RWPE1 (cell line): ENCODE measurements at regions of chr6 and their contacts with region 1.

Region 1: DNA sequence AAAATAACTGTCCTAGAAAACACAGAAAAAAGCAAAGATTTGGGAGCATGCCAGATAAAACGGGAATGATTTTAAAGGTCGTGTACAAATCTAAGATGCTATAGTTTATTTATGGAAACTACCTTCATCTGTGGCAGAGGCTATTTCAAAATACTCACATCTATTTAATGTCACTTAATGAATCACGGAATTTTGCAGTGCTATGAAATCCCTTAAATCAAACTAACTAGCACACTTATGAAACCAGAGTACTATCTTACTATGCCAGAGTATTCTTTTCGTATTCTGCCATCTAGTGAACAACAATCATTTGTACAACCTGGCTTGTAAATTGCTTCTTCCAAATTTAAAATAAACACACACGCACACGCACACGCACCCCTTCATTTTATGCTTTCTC is 77.9 kb upstream of the BMP5 start:
- DNase-seq: peak; percentile 14
- H3K27ac ChIP-seq: no peak overlapping the region
- CTCF ChIP-seq: peak; percentile 60

Region 2: DNA sequence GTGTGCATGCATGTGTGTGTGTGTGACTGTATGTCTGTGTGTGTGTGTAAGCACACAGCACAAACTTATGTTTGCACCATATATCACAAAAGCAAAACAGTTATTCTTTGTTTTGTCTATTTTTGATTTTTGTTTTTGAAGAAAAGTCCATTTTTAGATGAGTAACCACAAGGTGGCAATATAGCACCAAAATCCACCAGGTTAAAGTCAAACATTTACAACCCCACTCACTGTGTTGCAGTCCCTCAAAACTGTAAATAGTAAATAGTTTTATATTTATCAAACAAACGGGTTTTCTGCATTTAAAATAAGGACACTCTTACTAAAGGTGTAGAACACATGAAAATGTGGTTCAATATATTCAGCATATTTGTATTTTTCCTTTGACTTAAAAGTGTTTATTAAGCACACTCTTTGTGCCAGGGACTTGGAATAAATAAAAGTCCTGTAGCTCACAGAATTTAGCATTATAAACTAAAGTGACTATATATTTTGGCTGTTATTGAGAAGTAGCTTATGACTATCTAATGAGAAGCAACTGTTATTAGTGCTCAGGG is 507.6 kb before region 1 on chr6:
- CTCF ChIA-PET with region 1: interaction called, 10 read pairs
- POLR2A ChIA-PET with region 1: no interaction called
- DNase-seq: peak; percentile 16
- H3K27ac ChIP-seq: no peak overlapping the region
- CTCF ChIP-seq: peak; percentile 63

Region 3: GRCh38 chr6:55886185-55886836 is 67.0 kb before region 1 on chr6:
- CTCF ChIA-PET with region 1: no interaction called
- POLR2A ChIA-PET with region 1: no interaction called
- DNase-seq: no peak
- H3K27ac ChIP-seq: no peak overlapping the region
- CTCF ChIP-seq: peak; percentile 40